Posterior cingulate gyrus (tissue), 11 donors: ENCODE measurements at regions of chr11 and their contacts with region 1.

Region 1: GRCh38 chr11:62394825-62395538 is 23.9 kb upstream of the SCGB1A1 start:
- DNase-seq: peak; percentile 46 to 95 (median 73)

Region 2: GRCh38 chr11:62324738-62325556 is 70.0 kb before region 1 on chr11:
- intact Hi-C with region 1: no loop called
- DNase-seq: peak in 4 of 10 donors; percentile 27 to 90 (median 33)

Region 3: DNA sequence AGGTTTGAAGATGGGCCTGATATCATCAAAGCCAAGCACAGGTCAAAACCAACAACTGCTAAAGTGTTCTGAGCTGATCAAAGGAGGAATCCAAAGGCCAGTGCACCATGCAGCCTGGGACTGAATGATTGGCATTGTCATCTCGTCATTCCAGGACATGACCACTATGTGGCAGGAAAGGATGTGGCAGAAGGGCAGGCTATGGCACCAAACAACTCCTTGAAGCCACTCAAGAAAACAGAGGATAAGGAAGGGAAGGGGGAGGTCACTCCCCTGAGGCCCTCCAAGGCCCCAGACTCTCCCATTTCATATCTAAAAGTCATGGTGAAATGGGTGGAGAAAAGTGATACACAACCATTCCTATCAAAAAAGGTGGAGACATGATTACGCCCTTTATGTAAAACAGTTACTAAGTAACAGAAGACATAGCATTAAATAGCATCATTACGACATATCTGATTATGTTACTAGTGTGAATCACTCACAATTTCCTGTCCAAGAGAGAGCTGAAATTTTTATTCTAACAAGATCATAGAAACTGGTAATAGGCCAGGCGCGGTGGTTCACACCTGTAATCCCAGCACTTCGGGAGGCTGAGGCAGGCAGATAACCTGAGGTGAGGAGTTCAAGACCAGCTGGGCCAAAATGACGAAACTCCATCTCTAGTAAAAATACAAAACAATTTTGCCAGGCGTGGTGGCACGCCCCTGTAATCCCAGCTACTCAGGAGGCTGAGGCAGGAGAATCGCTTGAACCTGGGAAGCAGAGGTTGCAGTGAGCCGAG is 102.3 kb after region 1 on chr11:
- intact Hi-C with region 1: loop called (anchors 5 kb)
- DNase-seq: peak in 5 of 10 donors; percentile 28 to 73 (median 32)

Region 4: DNA sequence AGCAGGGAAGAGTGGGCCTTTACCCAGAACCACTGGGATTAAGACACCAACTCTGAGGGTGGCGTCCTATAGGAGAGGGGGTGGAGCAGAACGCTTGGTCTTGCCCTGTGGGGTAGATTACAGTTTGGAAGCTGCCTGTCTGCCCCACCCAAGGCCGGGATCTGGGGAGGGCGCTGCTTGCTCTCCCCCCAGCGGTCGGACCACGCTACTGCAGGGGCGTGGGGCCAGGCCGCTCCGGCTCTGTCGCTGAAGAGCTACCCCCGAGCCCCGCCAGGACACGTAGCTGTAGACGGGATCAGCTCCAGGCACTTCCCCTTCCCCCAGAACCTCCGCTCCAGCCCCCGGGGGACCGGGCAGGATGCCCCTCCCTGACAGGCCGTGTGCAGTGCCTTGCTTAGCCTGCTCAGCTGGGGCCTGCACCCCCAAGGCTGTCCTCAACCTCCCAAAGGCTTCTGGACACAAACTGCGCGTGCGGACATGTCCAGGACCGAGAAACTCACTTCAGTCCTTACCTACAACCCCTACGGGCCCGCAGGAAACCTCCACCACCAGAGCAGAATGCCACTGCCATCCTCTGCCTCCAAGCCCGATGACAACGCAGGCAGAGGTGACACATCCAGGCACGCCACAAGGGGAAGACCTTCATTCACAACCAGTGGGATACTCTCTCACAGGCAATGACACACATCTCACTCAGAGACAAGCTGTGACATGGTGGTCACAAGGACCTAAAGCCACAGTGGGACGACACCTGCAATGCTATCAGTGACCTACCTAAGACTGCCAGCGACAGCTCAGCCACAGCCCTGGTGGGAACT is 148.0 kb after region 1 on chr11:
- intact Hi-C with region 1: loop called (anchors 5 kb)
- DNase-seq: peak; percentile 42 to 95 (median 66)

Region 5: GRCh38 chr11:62694455-62695167 is 299.6 kb after region 1 on chr11:
- intact Hi-C with region 1: loop called (anchors 10 kb)
- DNase-seq: peak in 7 of 10 donors; percentile 62 to 95 (median 75)